Ovary (tissue), 10 donors: ENCODE measurements at regions of chr19 and their contacts with region 1.

Region 1: GRCh38 chr19:18865973-18866799 is 29.8 kb downstream of the CERS1 start:
- DNase-seq: peak; percentile 50 to 79 (median 71)
- H3K4me3 ChIP-seq: no peak overlapping the region
- H3K27ac ChIP-seq: no peak overlapping the region
- H3K4me1 ChIP-seq: peaks cover 3% of the 10 kb centered on the region
- H3K27me3 ChIP-seq: no peaks in the 10 kb centered on the region
- CTCF ChIP-seq: peak; percentile 92 to 96 (median 95)
- EP300 ChIP-seq: no peak
- POLR2A ChIP-seq: no peak

Region 2: GRCh38 chr19:18629166-18630088 is 236.8 kb before region 1 on chr19:
- intact Hi-C with region 1: no loop called
- DNase-seq: no peak
- H3K4me3 ChIP-seq: no peak overlapping the region
- H3K27ac ChIP-seq: no peak overlapping the region
- H3K4me1 ChIP-seq: no peaks in the 10 kb centered on the region
- H3K27me3 ChIP-seq: no peaks in the 10 kb centered on the region
- CTCF ChIP-seq: no peak
- EP300 ChIP-seq: peak; percentile 91
- POLR2A ChIP-seq: no peak

Region 3: GRCh38 chr19:18940769-18941407 is 74.7 kb after region 1 on chr19 and contains the start of gene HOMER3:
- intact Hi-C with region 1: loop called in 1 of 4 experiments (anchors 10 kb)
- DNase-seq: peak; percentile 81 to 91 (median 88)
- H3K4me3 ChIP-seq: peak within 1 kb of the TSS; percentile 80
- H3K27ac ChIP-seq: peak within 1 kb of the TSS in 1 of 2 donors; percentile 65
- H3K4me1 ChIP-seq: no peaks in the 10 kb centered on the region
- H3K27me3 ChIP-seq: no peaks in the 10 kb centered on the region
- CTCF ChIP-seq: no peak
- EP300 ChIP-seq: no peak
- POLR2A ChIP-seq: no peak
- total RNA-seq, gene HOMER3: 15.1 to 29.2 (median 18.6) TPM

Region 4: GRCh38 chr19:18985257-18985656 is 119.1 kb after region 1 on chr19:
- intact Hi-C with region 1: no loop called
- DNase-seq: no peak
- H3K4me3 ChIP-seq: no peak overlapping the region
- H3K27ac ChIP-seq: no peak overlapping the region
- H3K4me1 ChIP-seq: no peaks in the 10 kb centered on the region
- H3K27me3 ChIP-seq: no peaks in the 10 kb centered on the region
- CTCF ChIP-seq: no peak
- EP300 ChIP-seq: no peak
- POLR2A ChIP-seq: no peak